Heart left ventricle (tissue), 16 donors: ENCODE measurements at regions of chr14 and their contacts with region 1.

Region 1: DNA sequence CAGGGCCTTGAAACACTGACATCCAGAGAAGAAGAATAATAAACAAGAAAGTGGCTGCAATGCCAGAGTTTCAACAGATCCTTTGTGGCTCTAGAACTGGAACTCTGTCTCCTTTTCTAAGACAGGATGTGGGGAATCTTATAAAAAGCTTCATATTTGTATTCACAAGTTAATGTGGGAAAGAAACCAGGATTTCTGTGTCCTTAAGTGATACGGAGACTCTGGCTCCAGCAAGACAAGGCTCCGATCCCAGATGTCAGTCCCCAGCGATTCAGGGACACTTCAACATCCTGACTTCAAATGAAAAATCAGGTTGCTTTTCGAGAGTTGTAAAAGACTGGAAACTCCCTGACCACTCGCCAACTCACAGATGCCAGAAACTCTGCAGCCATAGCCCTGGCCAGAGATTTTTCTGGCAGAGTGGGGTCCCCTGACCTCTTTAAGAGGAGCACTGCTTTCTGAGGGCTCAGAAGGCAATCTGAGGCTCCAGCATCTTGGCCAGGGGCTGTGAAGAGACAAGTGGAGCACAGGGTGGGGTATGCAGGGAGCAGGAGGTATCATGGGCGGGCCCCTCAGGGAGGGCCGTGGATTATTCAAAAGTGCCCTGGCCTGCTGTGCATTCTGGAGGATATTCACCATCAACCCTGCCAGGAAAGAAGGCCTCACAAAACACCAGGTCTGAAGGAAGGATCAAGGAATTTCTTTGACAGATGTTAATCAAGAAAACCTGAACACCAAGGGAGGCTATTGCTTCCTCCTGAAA is 53.3 kb downstream of the TMX1 start:
- DNase-seq: peak; percentile 26 to 71 (median 64)
- ATAC-seq: peak; percentile 33 to 88 (median 60)
- H3K4me3 ChIP-seq: no peak overlapping the region
- H3K27ac ChIP-seq: peak overlapping the region; percentile 1 to 74 (median 56)
- H3K4me1 ChIP-seq: peaks cover 0 to 26% (median 10%) of the 10 kb centered on the region in 12 donors
- H3K27me3 ChIP-seq: no peaks in the 10 kb centered on the region
- CTCF ChIP-seq: no peak
- POLR2A ChIP-seq: no peak

Region 2: DNA sequence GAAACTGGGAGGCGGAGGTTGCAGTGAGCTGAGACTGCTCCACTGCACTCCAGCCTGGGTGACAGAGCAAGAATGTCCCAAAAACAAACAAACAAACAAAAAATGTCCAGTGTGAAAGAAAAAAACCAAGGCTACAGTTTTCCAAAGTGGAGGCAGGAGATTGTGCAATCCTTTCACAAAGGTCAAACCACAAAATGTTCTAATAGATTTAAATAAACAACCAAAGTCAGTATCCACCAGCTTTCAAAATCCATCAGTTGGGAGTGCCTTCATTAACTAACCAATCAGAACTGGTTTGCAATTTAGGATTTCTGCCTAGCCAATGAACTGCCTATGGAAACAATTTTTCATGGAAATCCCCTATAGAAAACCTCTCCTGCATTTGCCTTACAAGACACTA is 146.1 kb before region 1 on chr14:
- intact Hi-C with region 1: no loop called
- DNase-seq: no peak
- ATAC-seq: no peak
- H3K4me3 ChIP-seq: no peak overlapping the region
- H3K27ac ChIP-seq: no peak overlapping the region
- H3K4me1 ChIP-seq: no peaks in the 10 kb centered on the region
- H3K27me3 ChIP-seq: no peaks in the 10 kb centered on the region
- CTCF ChIP-seq: no peak
- POLR2A ChIP-seq: no peak

Region 3: DNA sequence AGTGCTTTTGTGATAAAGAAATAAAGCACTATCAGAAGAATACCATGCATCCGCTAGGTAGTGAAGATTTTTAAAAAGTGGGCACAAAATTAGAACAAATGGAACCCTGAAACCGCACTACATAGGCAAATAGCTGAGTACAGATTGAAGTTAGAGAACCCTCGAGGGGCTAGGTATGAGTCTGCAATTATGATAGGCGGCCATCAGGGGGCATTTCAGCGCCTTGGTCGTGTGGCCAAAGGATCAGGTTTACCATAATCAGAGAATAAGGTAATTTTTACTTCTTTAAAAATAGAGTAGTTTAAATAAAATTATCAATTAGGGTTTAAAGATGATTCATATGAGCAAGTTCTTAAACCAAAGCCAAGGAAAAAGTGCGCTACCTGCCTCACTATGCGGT is 76.5 kb after region 1 on chr14:
- intact Hi-C with region 1: loop called in 1 of 10 experiments (anchors 10 kb)
- DNase-seq: no peak
- ATAC-seq: no peak
- H3K4me3 ChIP-seq: no peak overlapping the region
- H3K27ac ChIP-seq: peak overlapping the region in 2 of 12 donors; percentile 42 to 67
- H3K4me1 ChIP-seq: peaks cover 0 to 12% (median 0%) of the 10 kb centered on the region in 12 donors
- H3K27me3 ChIP-seq: no peaks in the 10 kb centered on the region
- CTCF ChIP-seq: peak in 5 of 12 donors; percentile 12 to 39 (median 26)
- POLR2A ChIP-seq: no peak

Region 4: GRCh38 chr14:51386983-51387735 is 93.8 kb after region 1 on chr14:
- intact Hi-C with region 1: no loop called
- DNase-seq: no peak
- ATAC-seq: peak in 2 of 4 donors; percentile 48 to 57
- H3K4me3 ChIP-seq: no peak overlapping the region
- H3K27ac ChIP-seq: peak overlapping the region in 1 of 12 donors; percentile 42
- H3K4me1 ChIP-seq: peaks cover 0 to 15% (median 0%) of the 10 kb centered on the region in 12 donors
- H3K27me3 ChIP-seq: no peaks in the 10 kb centered on the region
- CTCF ChIP-seq: no peak
- POLR2A ChIP-seq: no peak